ENCODE measurements at regions of chr3 and their contacts with region 1.

Region 1: GRCh38 chr3:127544192-127544802 is 46.2 kb downstream of the TPRA1 start:
- DNase-seq: peak in 1 of 2 experiments; percentile 91
- H3K4me3 ChIP-seq: no peak overlapping the region
- H3K27ac ChIP-seq: no peak overlapping the region
- H3K4me1 ChIP-seq: peaks cover 0 to 9% (median 6%) of the 10 kb centered on the region in 4 experiments; a peak in 6 of 7 replicates
- H3K27me3 ChIP-seq: peaks cover 0 to 3% (median 0%) of the 10 kb centered on the region in 4 experiments; a peak in 2 of 7 replicates
- CTCF ChIP-seq: peak in 2 of 3 experiments; percentile 82 to 86; a peak in 3 of 4 replicates
- EP300 ChIP-seq: no peak
- POLR2A ChIP-seq: no peak
- RAD21 ChIP-seq: peak; percentile 79 to 89

Region 2: GRCh38 chr3:127233371-127233770 is 310.9 kb before region 1 on chr3:
- CTCF ChIA-PET with region 1: no interaction called
- POLR2A ChIA-PET with region 1: no interaction called
- DNase-seq: no peak
- H3K4me3 ChIP-seq: no peak overlapping the region
- H3K27ac ChIP-seq: no peak overlapping the region
- H3K4me1 ChIP-seq: no peaks in the 10 kb centered on the region
- H3K27me3 ChIP-seq: no peaks in the 10 kb centered on the region
- CTCF ChIP-seq: no peak
- EP300 ChIP-seq: no peak
- POLR2A ChIP-seq: no peak
- RAD21 ChIP-seq: 0 out of 4 replicates have a peak, but pooled peaks of 1 of the 2 experiments have one; percentile 8

Region 3: GRCh38 chr3:127525373-127525772 is 18.9 kb before region 1 on chr3:
- CTCF ChIA-PET with region 1: interaction called, 10 read pairs
- POLR2A ChIA-PET with region 1: interaction called, 3 read pairs
- DNase-seq: no peak
- H3K4me3 ChIP-seq: no peak overlapping the region
- H3K27ac ChIP-seq: no peak overlapping the region
- H3K4me1 ChIP-seq: no peaks in the 10 kb centered on the region
- H3K27me3 ChIP-seq: no peaks in the 10 kb centered on the region
- CTCF ChIP-seq: no peak
- EP300 ChIP-seq: no peak
- POLR2A ChIP-seq: no peak
- RAD21 ChIP-seq: no peak

Region 4: DNA sequence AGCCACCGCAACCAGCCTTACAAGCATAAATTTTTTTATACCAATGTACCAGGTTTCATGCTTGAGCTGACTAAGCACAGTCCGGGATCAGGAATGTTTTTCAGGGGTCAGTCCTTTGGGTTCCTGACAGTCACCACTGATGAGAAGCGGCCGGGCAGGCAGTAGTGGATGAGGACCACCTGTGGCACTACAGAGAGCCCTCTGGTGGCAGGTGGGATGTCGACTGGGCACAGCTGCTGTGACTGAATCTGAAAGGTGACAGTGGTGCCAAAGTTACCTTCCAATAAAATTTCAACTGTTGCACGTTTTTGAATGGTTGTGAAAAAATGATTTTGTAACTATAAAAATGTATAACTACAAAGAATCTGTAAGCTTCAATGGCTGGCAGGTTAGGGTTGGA is 12.3 kb after region 1 on chr3:
- CTCF ChIA-PET with region 1: interaction called, 19 read pairs
- POLR2A ChIA-PET with region 1: no interaction called
- DNase-seq: no peak
- H3K4me3 ChIP-seq: no peak overlapping the region
- H3K27ac ChIP-seq: no peak overlapping the region
- H3K4me1 ChIP-seq: no peaks in the 10 kb centered on the region
- H3K27me3 ChIP-seq: no peaks in the 10 kb centered on the region; a peak in 1 of 7 replicates
- CTCF ChIP-seq: peak; percentile 52 to 78 (median 67)
- EP300 ChIP-seq: no peak
- POLR2A ChIP-seq: no peak
- RAD21 ChIP-seq: peak; percentile 34 to 44; a peak in 3 of 4 replicates